Activated naive CD8-positive, alpha-beta T cell treated with anti-CD3 and anti-CD28 coated beads, Interleukin-2, amount 10 ng/mL, durations not matched to agents 7 days and 5 days (primary cell): ENCODE measurements at regions of chr1 and their contacts with region 1.

Region 1: GRCh38 chr1:226677027-226678020 is 61.8 kb downstream of the ITPKB start:
- DNase-seq: no peak
- ATAC-seq: peak; percentile 64
- H3K4me3 Mint-ChIP-seq: peak overlapping the region; percentile 81
- H3K27ac Mint-ChIP-seq: peak overlapping the region; percentile 89
- H3K4me1 Mint-ChIP-seq: peaks cover 80% of the 10 kb centered on the region
- H3K27me3 Mint-ChIP-seq: no peaks in the 10 kb centered on the region

Region 2: GRCh38 chr1:226662642-226663326 is 14.5 kb before region 1 on chr1:
- POLR2A ChIA-PET with region 1: interaction called, 20 read pairs
- DNase-seq: peak; percentile 68
- ATAC-seq: peak; percentile 88
- H3K4me3 Mint-ChIP-seq: peak overlapping the region; percentile 69
- H3K27ac Mint-ChIP-seq: peak overlapping the region; percentile 94
- H3K4me1 Mint-ChIP-seq: peaks cover 84% of the 10 kb centered on the region
- H3K27me3 Mint-ChIP-seq: no peaks in the 10 kb centered on the region